Sigmoid colon (tissue), 7 donors: ENCODE measurements at regions of chr14 and their contacts with region 1.

Region 1: DNA sequence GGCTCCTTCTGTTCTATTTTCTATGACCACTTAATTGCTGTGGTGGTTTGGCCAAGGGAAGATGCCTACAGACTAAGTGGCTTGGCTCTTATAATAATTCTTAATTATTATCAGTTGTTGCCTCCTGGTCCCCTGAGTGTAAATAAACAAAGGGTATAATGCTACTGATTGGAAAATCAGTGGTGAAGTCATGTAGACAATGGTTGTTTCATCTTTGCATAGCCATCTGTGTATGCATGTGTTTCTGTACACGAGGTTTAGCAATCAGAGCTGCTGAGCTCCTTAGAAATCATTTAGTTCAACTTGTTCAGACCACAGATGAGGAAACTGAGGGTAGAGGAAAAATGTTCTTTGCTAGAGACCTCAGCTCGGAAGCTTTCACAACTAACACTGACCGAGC is 152.2 kb downstream of the STXBP6 start:
- DNase-seq: no peak
- H3K4me3 ChIP-seq: no peak overlapping the region
- H3K27ac ChIP-seq: no peak overlapping the region
- H3K4me1 ChIP-seq: peaks cover 0 to 10% (median 7%) of the 10 kb centered on the region in 4 donors
- H3K27me3 ChIP-seq: no peaks in the 10 kb centered on the region
- CTCF ChIP-seq: no peak
- EP300 ChIP-seq: no peak
- POLR2A ChIP-seq: no peak

Region 2: GRCh38 chr14:24721775-24722174 is 176.0 kb before region 1 on chr14:
- intact Hi-C with region 1: no loop called
- DNase-seq: no peak
- H3K4me3 ChIP-seq: no peak overlapping the region
- H3K27ac ChIP-seq: no peak overlapping the region
- H3K4me1 ChIP-seq: no peaks in the 10 kb centered on the region
- H3K27me3 ChIP-seq: no peaks in the 10 kb centered on the region
- CTCF ChIP-seq: no peak
- EP300 ChIP-seq: no peak
- POLR2A ChIP-seq: no peak

Region 3: DNA sequence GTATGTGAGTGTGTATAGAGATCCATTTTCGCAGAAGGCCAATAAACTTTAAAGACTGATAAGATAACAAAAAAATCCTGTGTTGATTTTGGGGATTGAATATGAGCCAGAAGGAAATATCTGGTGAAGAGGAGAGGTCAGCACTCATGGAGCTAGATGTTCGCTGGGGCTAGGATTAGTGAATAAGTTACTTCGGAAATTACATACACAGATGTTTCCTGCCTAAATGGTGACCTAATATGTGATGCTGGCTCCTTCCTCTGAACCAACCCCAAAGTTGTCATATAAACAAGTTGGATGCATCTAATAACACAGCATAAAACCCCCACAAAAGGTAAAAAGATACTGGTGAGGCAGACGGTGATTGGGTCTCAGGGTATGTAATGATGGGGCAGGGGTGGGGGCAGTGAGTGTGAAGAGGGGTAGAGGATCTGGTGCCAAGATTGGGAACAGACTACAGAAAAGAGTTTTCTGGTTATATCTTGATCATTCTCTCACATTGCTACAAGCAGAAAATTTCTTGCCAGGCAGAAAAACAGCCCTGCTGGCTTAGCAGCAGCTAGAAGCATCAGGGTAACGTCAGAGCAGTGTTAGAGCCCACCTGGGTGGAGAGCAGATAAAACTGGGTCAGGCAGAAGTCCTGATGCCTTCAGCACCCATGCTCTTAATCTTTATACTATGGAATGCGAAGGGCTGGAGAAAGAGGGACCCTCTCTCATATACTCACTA is 123.4 kb before region 1 on chr14:
- intact Hi-C with region 1: no loop called
- DNase-seq: no peak
- H3K4me3 ChIP-seq: no peak overlapping the region
- H3K27ac ChIP-seq: no peak overlapping the region
- H3K4me1 ChIP-seq: no peaks in the 10 kb centered on the region
- H3K27me3 ChIP-seq: no peaks in the 10 kb centered on the region
- CTCF ChIP-seq: no peak
- EP300 ChIP-seq: no peak
- POLR2A ChIP-seq: no peak

Region 4: DNA sequence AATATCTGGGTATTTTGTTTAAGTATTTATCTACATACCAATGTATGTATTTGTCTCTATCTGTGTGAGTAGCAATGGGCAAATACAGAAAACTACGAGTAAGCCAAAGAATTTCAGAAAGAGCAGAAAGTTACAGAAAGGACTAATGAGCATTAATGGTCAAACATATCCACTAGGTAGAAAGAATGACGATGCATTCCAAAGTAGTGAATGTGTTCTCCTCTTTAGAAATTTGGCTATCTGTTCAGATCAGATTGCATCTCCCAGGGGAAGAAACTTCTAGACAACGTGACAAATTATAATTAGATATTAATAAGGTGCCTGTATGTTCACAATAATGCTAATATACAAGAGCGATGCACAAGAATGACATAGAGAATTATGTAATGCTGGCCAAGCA is 69.3 kb before region 1 on chr14:
- intact Hi-C with region 1: no loop called
- DNase-seq: no peak
- H3K4me3 ChIP-seq: no peak overlapping the region
- H3K27ac ChIP-seq: no peak overlapping the region
- H3K4me1 ChIP-seq: no peaks in the 10 kb centered on the region
- H3K27me3 ChIP-seq: no peaks in the 10 kb centered on the region
- CTCF ChIP-seq: no peak
- EP300 ChIP-seq: no peak
- POLR2A ChIP-seq: no peak

Region 5: GRCh38 chr14:24924544-24924943 is 26.8 kb after region 1 on chr14:
- intact Hi-C with region 1: loop called (anchors 2 kb)
- DNase-seq: no peak
- H3K4me3 ChIP-seq: no peak overlapping the region
- H3K27ac ChIP-seq: no peak overlapping the region
- H3K4me1 ChIP-seq: peaks cover 0 to 20% (median 10%) of the 10 kb centered on the region in 4 donors
- H3K27me3 ChIP-seq: no peaks in the 10 kb centered on the region
- CTCF ChIP-seq: no peak
- EP300 ChIP-seq: no peak
- POLR2A ChIP-seq: no peak